ENCODE measurements at regions of chr5 and their contacts with region 1.

Region 1: DNA sequence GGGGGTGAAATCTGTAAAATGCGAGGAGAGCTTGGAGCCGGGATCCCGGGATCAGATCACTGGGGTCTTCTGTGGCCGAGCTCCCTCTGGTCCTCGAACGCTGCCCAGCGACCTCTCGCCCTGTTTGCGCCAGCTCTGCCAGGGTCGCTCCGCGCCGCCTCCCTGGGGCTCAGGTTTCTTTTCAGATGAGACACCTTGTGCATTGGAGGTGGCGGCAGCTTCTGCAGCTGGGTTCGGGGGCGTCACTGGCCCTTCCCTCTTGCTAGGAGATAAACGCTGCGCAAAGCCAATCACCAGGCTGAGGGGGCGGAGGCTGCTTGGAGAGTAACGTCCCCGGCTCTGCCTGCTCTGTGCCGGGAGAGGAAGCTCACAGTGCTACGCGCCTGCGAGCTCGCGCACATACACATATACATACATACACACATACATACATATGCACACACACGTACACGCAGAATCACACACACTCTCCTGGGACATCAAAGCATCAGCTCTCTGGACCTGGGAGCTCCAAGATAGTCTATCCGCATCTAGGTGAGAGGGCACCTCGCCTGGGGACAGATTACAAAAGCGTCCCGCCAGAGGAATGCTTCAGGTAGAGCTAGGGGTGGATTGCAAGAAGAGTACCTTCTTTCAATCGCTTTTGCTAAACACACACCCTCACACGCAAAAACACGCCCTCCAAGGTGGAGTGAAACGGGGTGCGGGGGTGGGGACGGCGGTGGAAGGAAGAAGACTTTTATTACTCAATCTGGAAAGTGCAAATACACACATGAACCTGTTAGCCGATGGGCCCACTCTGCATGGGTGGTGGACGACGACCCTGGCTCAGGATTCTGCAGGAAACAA is at the start of gene ST8SIA4:
- DNase-seq: peak; percentile 82 to 95
- ATAC-seq: peak; percentile 69 to 86 (median 70)
- H3K4me3 ChIP-seq: peak within 1 kb of the TSS; percentile 72
- H3K4me3 Mint-ChIP-seq: peak within 1 kb of the TSS; percentile 96
- H3K27ac ChIP-seq: peak within 1 kb of the TSS; percentile 95
- H3K27ac Mint-ChIP-seq: peak within 1 kb of the TSS; percentile 99 to 100
- H3K4me1 ChIP-seq: peaks cover 30% of the 10 kb centered on the region
- H3K4me1 Mint-ChIP-seq: peaks cover 63 to 64% of the 10 kb centered on the region in 2 donors
- H3K27me3 ChIP-seq: no peaks in the 10 kb centered on the region
- H3K27me3 Mint-ChIP-seq: no peaks in the 10 kb centered on the region
- CTCF ChIP-seq: no peak
- total RNA-seq, gene ST8SIA4: 36.3 to 63.1 (median 59.9) TPM

Region 2: GRCh38 chr5:99032234-99033013 is 1870.8 kb before region 1 on chr5:
- intact Hi-C with region 1: loop called (anchors 10 kb)
- DNase-seq: peak in 1 of 2 donors; percentile 60
- ATAC-seq: peak in 2 of 3 donors; percentile 29 to 35
- H3K4me3 ChIP-seq: peak overlapping the region; percentile 50
- H3K4me3 Mint-ChIP-seq: peak overlapping the region; percentile 90
- H3K27ac ChIP-seq: peak overlapping the region; percentile 99
- H3K27ac Mint-ChIP-seq: peak overlapping the region; percentile 93 to 94
- H3K4me1 ChIP-seq: peaks cover 16% of the 10 kb centered on the region
- H3K4me1 Mint-ChIP-seq: peaks cover 22 to 27% of the 10 kb centered on the region in 2 donors
- H3K27me3 ChIP-seq: no peaks in the 10 kb centered on the region
- H3K27me3 Mint-ChIP-seq: no peaks in the 10 kb centered on the region
- CTCF ChIP-seq: no peak

Region 3: DNA sequence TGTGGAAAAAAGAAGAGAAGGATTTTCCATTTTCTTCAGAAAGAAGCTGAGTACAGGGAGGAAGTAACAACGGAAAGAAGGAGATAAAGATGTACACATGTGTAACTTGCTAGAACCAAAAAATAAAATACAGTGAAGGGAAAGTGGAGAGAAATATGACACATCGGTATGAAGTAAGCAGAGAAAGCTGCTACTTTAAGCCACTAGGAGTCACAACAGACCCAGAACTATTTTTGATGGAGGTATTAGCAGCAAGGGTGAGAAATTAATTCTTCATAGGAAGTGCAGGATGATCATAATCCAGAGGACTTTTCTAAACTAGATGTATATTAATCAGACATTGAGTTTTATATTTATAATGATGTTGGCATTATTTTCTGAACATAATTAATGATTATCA is 279.5 kb before region 1 on chr5:
- intact Hi-C with region 1: loop called (anchors 10 kb)
- DNase-seq: peak in 1 of 2 donors; percentile 61
- ATAC-seq: peak; percentile 58 to 74 (median 62)
- H3K4me3 ChIP-seq: no peak overlapping the region
- H3K4me3 Mint-ChIP-seq: no peak overlapping the region
- H3K27ac ChIP-seq: no peak overlapping the region
- H3K27ac Mint-ChIP-seq: no peak overlapping the region
- H3K4me1 ChIP-seq: no peaks in the 10 kb centered on the region
- H3K4me1 Mint-ChIP-seq: no peaks in the 10 kb centered on the region
- H3K27me3 ChIP-seq: no peaks in the 10 kb centered on the region
- H3K27me3 Mint-ChIP-seq: no peaks in the 10 kb centered on the region
- CTCF ChIP-seq: peak; percentile 67

Region 4: DNA sequence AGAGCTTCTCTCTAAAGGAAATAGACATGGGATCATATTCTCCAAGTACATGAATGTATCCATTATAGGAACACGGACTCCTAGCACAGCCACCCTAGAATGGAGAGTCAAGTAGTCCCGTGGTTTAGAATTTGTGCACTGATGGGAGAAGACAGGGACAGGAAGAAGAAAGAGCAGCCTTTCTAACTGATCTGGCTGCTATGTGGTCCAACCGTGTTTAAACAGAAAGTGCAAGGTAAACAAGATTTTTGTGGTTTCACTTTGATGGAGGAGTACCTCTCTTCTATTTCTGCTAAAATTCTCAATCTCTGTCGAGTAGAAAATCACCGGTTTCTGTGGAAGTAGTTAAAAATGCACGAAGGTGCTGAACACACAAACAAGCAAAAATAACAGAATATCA is 171.5 kb before region 1 on chr5:
- intact Hi-C with region 1: loop called (anchors 10 kb)
- DNase-seq: peak in 1 of 2 donors; percentile 66
- ATAC-seq: peak; percentile 63 to 75 (median 64)
- H3K4me3 ChIP-seq: peak overlapping the region; percentile 6
- H3K4me3 Mint-ChIP-seq: peak overlapping the region; percentile 77
- H3K27ac ChIP-seq: peak overlapping the region; percentile 25
- H3K27ac Mint-ChIP-seq: peak overlapping the region in 1 of 2 donors; percentile 86
- H3K4me1 ChIP-seq: no peaks in the 10 kb centered on the region
- H3K4me1 Mint-ChIP-seq: peaks cover 7 to 8% of the 10 kb centered on the region in 2 donors
- H3K27me3 ChIP-seq: no peaks in the 10 kb centered on the region
- H3K27me3 Mint-ChIP-seq: no peaks in the 10 kb centered on the region
- CTCF ChIP-seq: no peak

Region 5: GRCh38 chr5:100780376-100780870 is 122.8 kb before region 1 on chr5:
- intact Hi-C with region 1: no loop called
- DNase-seq: peak in 1 of 2 donors; percentile 54
- ATAC-seq: peak; percentile 64 to 71 (median 66)
- H3K4me3 ChIP-seq: peak overlapping the region; percentile 8
- H3K4me3 Mint-ChIP-seq: peak overlapping the region; percentile 83
- H3K27ac ChIP-seq: peak overlapping the region; percentile 67
- H3K27ac Mint-ChIP-seq: peak overlapping the region; percentile 79 to 83
- H3K4me1 ChIP-seq: peaks cover 4% of the 10 kb centered on the region
- H3K4me1 Mint-ChIP-seq: peaks cover 23 to 34% of the 10 kb centered on the region in 2 donors
- H3K27me3 ChIP-seq: no peaks in the 10 kb centered on the region
- H3K27me3 Mint-ChIP-seq: peaks cover 0 to 3% of the 10 kb centered on the region in 2 donors
- CTCF ChIP-seq: no peak

Region 6: GRCh38 chr5:100890461-100891008 is 12.7 kb before region 1 on chr5:
- intact Hi-C with region 1: loop called (anchors 1 kb)
- DNase-seq: peak in 1 of 2 donors; percentile 24
- ATAC-seq: peak; percentile 23 to 57 (median 49)
- H3K4me3 ChIP-seq: peak overlapping the region; percentile 20
- H3K4me3 Mint-ChIP-seq: peak overlapping the region; percentile 91
- H3K27ac ChIP-seq: peak overlapping the region; percentile 84
- H3K27ac Mint-ChIP-seq: peak overlapping the region; percentile 94 to 98
- H3K4me1 ChIP-seq: no peaks in the 10 kb centered on the region
- H3K4me1 Mint-ChIP-seq: peaks cover 51 to 71% of the 10 kb centered on the region in 2 donors
- H3K27me3 ChIP-seq: no peaks in the 10 kb centered on the region
- H3K27me3 Mint-ChIP-seq: no peaks in the 10 kb centered on the region
- CTCF ChIP-seq: no peak